Right ventricle myocardium inferior (tissue), 1 donor: ENCODE measurements at regions of chr13 and their contacts with region 1.

Region 1: GRCh38 chr13:45047394-45048310 is 58.3 kb downstream of the GPALPP1 start:
- DNase-seq: no peak
- ATAC-seq: peak; percentile 70

Region 2: DNA sequence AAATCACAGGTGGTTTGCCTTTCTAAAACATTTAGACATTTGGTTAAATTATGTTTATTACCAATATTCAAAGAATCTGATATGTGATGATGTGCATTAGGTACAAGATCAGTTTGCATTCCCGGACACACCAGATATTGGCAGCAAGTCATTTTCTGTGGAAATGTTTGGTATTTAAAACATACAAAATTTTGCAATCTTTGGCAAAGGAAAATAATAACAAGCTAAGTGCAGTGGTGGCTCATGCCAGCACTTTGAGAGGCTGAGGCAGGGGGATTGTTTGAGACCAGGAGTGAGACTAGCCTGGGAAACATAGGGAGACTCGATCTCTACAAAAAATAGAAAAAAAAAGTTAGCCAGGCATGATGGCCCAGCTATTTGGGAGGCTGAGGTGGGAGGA is 442.4 kb before region 1 on chr13:
- intact Hi-C with region 1: no loop called
- DNase-seq: no peak
- ATAC-seq: no peak

Region 3: DNA sequence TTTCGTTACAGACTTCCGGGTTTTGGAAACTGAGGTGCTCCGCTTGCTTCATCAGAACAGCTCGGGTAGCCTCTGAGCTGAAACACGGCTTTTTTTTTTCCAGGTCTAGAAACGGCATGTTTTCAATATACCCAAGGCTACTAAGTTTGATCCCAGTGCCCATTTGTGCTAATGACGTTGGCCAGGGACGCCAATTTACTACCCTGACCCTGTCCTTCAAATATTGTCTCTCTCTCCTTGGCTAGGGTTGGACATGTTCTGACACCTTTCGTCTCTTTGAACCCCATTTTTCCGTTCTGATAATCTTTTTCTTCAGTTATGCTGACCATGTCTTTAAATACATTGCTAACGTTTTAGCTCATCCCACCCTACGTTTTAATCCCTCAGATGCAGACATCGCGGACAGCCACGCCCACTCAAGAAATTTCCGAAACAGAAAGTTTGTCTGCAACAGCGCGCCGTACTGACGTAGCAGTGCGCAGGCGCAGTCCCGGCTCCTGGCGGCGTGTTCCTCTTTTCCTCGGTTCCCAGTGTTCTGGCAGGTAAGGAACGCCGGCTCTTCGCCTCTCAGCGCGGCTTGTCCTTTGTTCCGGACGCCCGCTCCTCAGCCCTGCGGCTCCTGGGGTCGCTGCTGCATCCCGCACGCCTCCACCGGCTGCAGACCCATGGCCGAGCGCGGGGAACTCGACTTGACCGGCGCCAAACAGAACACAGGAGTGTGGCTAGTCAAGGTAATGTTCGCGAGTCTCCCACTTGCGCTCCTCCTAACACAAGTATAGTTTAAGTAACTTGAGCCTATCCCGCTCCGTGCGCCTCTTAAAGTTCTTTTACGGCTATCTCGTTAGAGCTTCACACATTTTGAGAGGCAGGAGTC is 72.6 kb after region 1 on chr13 and contains the start of gene GTF2F2:
- intact Hi-C with region 1: loop called (anchors 5 kb)
- DNase-seq: peak; percentile 94
- ATAC-seq: peak; percentile 93
- total RNA-seq, gene GTF2F2: 19.7 TPM

Region 4: DNA sequence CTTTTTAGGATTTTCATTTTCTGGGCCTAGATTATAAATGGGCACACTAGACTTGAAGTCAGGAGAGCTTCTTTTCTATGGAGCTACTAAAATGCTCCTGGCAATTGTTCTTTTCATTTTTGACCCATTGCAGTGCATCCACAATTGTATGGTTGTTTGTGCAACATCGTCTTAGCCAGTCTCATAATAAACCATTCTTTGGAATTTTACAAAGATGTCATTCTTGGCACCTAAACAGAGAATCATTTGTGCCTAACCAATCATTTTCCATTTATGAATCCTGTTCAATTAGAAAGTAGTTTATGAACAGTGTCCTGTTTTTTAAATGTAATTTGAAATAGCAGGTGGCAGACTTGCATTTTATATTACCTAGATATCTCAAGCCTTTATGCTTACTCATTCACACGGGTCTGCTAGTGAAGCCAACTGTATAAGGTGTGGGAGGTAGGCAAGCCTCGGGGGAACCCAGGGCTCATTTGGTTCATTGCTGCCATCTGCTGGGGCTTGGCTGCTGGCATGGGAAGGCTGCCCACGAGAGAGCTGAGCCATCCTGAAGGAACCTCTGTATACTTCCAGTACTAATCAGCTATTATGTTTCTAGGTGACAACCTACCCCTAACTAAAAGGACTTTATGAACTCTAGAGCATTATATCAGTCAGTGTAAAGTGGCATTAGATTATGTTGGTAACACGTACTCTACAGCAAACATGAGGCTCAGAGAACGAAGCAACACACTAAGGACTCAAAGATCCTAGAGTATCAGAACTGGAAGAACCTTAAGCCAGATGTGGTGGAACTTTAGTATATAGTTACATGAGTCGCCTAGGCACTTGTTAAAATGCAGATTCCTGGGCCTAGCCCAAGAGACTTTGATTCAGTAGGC is 233.3 kb after region 1 on chr13:
- intact Hi-C with region 1: loop called (anchors 1 kb)
- DNase-seq: peak; percentile 75
- ATAC-seq: peak; percentile 91

Region 5: DNA sequence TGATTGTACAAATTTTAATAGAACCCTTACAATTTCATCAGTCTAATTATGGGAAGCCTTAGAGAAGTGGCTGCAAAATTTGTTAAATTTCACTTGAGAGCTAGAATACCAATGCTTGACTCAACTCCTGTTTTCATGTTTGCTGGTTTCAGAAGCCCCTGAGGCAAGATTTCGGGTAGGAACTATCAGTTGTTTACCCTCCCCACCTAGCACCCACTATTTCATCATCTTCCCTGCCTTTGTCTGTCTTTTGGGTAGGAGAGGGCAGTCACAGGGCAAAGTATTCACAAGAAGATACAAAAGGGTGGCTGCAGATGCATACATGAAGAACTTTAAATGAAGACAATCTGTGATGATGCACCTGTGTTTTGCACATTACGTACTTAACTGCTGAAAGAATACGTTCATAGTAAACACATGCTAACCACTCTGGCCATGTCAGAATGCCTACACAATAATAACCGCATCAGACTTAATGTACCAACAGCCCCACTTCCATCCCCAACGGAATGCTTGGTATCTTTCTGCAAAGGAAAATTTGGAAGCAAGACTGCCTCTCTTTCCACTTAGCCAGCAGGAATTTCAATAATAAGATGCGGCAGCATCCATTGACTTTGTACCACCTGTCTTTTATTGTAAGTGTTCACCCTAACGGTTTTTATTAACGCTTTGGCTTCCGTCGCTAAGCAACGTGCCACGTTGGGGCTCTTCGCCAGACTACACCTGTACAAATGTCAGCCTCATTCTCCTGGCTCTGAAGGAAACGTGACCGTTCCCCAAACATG is 262.9 kb after region 1 on chr13:
- intact Hi-C with region 1: loop called (anchors 2 kb)
- DNase-seq: no peak
- ATAC-seq: no peak